Ascending aorta (tissue), 2 donors: ENCODE measurements at regions of chr14 and their contacts with region 1.

Region 1: GRCh38 chr14:73491256-73492042 is 716 bp downstream of the RIOX1 start:
- DNase-seq: peak in 1 of 2 donors; percentile 72
- H3K4me3 ChIP-seq: peak overlapping the region; percentile 77 to 87
- H3K27ac ChIP-seq: peak overlapping the region; percentile 71 to 78
- H3K4me1 ChIP-seq: peaks cover 8 to 25% of the 10 kb centered on the region in 2 donors
- H3K27me3 ChIP-seq: no peaks in the 10 kb centered on the region
- CTCF ChIP-seq: no peak

Region 2: DNA sequence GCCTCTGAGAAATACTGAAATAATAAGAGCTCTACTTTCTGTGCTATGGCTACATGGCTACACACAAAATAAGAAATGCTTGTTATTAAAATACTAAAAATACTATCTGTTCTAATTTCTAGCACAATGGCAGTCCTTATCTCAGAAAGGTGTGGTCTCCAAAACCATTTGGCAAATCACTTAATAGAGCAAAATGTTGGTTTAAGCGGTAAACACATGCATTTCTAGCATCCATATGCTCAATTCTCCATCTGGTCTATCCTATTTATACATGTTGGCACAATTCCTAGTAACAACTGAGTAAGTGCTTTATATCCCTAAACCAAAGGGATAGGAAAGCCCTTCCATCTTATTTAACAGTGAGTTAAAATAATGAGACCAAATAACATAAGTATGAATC is 147.1 kb before region 1 on chr14:
- intact Hi-C with region 1: no loop called
- DNase-seq: no peak
- H3K4me3 ChIP-seq: no peak overlapping the region
- H3K27ac ChIP-seq: no peak overlapping the region
- H3K4me1 ChIP-seq: no peaks in the 10 kb centered on the region
- H3K27me3 ChIP-seq: no peaks in the 10 kb centered on the region
- CTCF ChIP-seq: no peak

Region 3: GRCh38 chr14:73458151-73458976 is 33.1 kb before region 1 on chr14 and contains the start of gene NUMB:
- intact Hi-C with region 1: loop called (anchors 2 kb)
- DNase-seq: peak; percentile 97 to 99
- H3K4me3 ChIP-seq: peak within 1 kb of the TSS; percentile 94 to 96
- H3K27ac ChIP-seq: peak within 1 kb of the TSS; percentile 90 to 91
- H3K4me1 ChIP-seq: peaks cover 0 to 40% of the 10 kb centered on the region in 2 donors
- H3K27me3 ChIP-seq: no peaks in the 10 kb centered on the region
- CTCF ChIP-seq: no peak
- total RNA-seq, gene NUMB: 20.1 TPM

Region 4: DNA sequence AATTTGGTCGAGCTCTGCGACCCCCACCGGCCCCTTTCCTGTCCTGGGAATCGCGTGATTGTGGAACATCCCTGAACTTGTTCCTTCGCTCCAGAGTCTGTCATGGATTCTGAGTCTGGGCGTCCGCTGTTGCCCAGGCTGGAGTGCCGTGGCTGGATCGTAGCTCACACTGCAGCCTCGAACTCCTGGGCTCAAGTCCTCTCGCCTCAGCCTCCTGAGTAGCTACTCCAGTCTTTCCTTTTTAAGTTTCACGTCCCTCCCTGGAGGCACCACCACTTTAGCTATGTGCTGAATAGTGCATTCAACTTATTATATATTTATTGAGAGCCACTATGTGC is 121.6 kb after region 1 on chr14:
- intact Hi-C with region 1: loop called (anchors 5 kb)
- DNase-seq: no peak
- H3K4me3 ChIP-seq: peak overlapping the region; percentile 73 to 80
- H3K27ac ChIP-seq: peak overlapping the region; percentile 85 to 86
- H3K4me1 ChIP-seq: no peaks in the 10 kb centered on the region
- H3K27me3 ChIP-seq: no peaks in the 10 kb centered on the region
- CTCF ChIP-seq: no peak

Region 5: DNA sequence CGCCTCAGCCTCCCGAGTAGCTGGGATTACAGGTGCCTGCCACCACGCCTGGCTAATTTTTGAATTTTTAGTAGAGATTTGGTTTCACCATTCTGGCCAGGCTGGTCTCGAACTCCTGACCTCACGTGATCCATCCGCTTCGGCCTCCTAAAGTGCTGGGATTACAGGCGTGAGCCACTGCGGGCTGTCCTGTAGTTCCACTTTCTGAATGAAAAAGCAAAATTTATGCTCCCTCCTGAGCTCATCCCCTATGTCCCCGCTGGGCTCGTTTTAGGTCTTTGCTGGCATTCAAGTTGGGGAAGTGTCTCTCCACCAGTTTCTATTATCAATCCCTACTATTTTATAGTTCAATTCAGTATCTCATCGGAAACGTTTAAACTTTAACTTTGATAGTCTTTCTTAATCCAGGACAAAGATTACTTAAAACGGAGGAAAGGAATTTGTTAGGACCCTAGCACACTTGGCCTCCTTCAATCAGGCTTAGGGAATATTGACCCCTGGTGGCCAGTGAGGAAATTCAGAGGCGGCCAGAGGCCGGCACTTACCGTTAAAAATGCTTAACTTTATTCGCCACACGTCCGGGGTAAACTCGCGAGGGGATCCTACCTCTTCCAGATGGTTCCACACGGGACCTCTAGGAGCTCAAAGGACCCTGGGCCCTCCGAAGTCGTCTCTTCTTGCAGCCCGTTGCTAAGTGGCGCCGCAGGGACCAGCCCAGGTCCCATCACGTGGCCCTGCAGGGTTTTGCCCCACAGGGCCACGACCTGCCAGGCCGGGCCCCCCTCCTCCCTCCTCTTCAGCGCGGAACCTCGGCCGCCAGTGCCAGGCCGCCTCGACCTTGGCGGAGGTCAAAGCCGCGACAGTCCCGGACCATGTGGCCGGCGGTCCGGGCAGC is 141.9 kb after region 1 on chr14:
- intact Hi-C with region 1: loop called (anchors 5 kb)
- DNase-seq: peak in 1 of 2 donors; percentile 83
- H3K4me3 ChIP-seq: peak overlapping the region; percentile 43 to 82
- H3K27ac ChIP-seq: peak overlapping the region; percentile 30 to 72
- H3K4me1 ChIP-seq: no peaks in the 10 kb centered on the region
- H3K27me3 ChIP-seq: no peaks in the 10 kb centered on the region
- CTCF ChIP-seq: peak; percentile 83 to 87 (median 84)